CD4-positive, alpha-beta T cell (primary cell): ENCODE measurements at regions of chr4 and their contacts with region 1.

Region 1: GRCh38 chr4:69881173-69881773 is 21.3 kb upstream of the SULT1E1 start:
- DNase-seq: peak in 9 of 14 experiments; percentile 1 to 64 (median 9)
- ATAC-seq: peak; percentile 82
- H3K4me3 ChIP-seq: no peak overlapping the region
- H3K4me3 Mint-ChIP-seq: no peak overlapping the region
- H3K27ac ChIP-seq: no peak overlapping the region
- H3K27ac Mint-ChIP-seq: no peak overlapping the region
- H3K4me1 ChIP-seq: no peaks in the 10 kb centered on the region
- H3K4me1 Mint-ChIP-seq: no peaks in the 10 kb centered on the region
- H3K27me3 ChIP-seq: no peaks in the 10 kb centered on the region
- H3K27me3 Mint-ChIP-seq: peaks cover 12% of the 10 kb centered on the region
- CTCF ChIP-seq: peak; percentile 84

Region 2: GRCh38 chr4:68271851-68272756 is 1609.2 kb before region 1 on chr4:
- CTCF ChIA-PET with region 1: no interaction called
- POLR2A ChIA-PET with region 1: no interaction called
- intact Hi-C with region 1: loop called in 1 of 2 experiments (anchors 5 kb)
- DNase-seq: peak in 3 of 14 experiments; percentile 55 to 61 (median 56)
- ATAC-seq: peak; percentile 56
- H3K4me3 ChIP-seq: no peak overlapping the region
- H3K4me3 Mint-ChIP-seq: peak overlapping the region; percentile 31
- H3K27ac ChIP-seq: no peak overlapping the region
- H3K27ac Mint-ChIP-seq: no peak overlapping the region
- H3K4me1 ChIP-seq: no peaks in the 10 kb centered on the region
- H3K4me1 Mint-ChIP-seq: peaks cover 3% of the 10 kb centered on the region
- H3K27me3 ChIP-seq: peaks cover 0 to 4% of the 10 kb centered on the region in 2 experiments
- H3K27me3 Mint-ChIP-seq: peaks cover 17% of the 10 kb centered on the region
- CTCF ChIP-seq: peak; percentile 85

Region 3: DNA sequence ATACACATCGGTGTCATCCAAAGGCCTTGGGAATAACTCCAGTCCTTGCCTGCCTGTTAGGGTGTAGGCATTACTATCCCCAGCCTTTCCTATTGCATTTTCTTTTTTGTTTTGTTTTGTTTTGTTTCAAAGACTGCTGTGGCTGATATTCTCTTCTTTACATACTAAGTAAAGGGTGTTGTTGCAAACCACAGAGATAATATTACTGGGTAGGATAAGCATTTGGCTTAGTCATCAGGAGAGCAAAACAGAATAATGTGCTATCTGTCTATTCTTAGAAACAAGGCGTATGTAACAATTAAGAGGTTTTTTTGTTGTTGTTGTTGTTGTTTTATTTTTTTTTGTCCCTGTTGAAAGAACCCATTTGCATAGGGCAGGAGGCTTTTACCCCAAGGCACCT is 559.2 kb before region 1 on chr4:
- CTCF ChIA-PET with region 1: no interaction called
- POLR2A ChIA-PET with region 1: no interaction called
- intact Hi-C with region 1: loop called in 1 of 2 experiments (anchors 10 kb)
- DNase-seq: no peak
- ATAC-seq: no peak
- H3K4me3 ChIP-seq: no peak overlapping the region
- H3K4me3 Mint-ChIP-seq: no peak overlapping the region
- H3K27ac ChIP-seq: no peak overlapping the region
- H3K27ac Mint-ChIP-seq: no peak overlapping the region
- H3K4me1 ChIP-seq: no peaks in the 10 kb centered on the region
- H3K4me1 Mint-ChIP-seq: no peaks in the 10 kb centered on the region
- H3K27me3 ChIP-seq: no peaks in the 10 kb centered on the region
- H3K27me3 Mint-ChIP-seq: no peaks in the 10 kb centered on the region
- CTCF ChIP-seq: no peak

Region 4: GRCh38 chr4:69689599-69689998 is 191.7 kb before region 1 on chr4:
- CTCF ChIA-PET with region 1: no interaction called
- POLR2A ChIA-PET with region 1: no interaction called
- intact Hi-C with region 1: loop called (anchors 1 kb)
- DNase-seq: peak in 3 of 14 experiments; percentile 49 to 67 (median 56)
- ATAC-seq: peak; percentile 51
- H3K4me3 ChIP-seq: no peak overlapping the region
- H3K4me3 Mint-ChIP-seq: no peak overlapping the region
- H3K27ac ChIP-seq: no peak overlapping the region
- H3K27ac Mint-ChIP-seq: no peak overlapping the region
- H3K4me1 ChIP-seq: no peaks in the 10 kb centered on the region
- H3K4me1 Mint-ChIP-seq: peaks cover 5% of the 10 kb centered on the region
- H3K27me3 ChIP-seq: no peaks in the 10 kb centered on the region
- H3K27me3 Mint-ChIP-seq: no peaks in the 10 kb centered on the region
- CTCF ChIP-seq: peak; percentile 77

Region 5: GRCh38 chr4:69823481-69824186 is 57.6 kb before region 1 on chr4:
- CTCF ChIA-PET with region 1: no interaction called
- POLR2A ChIA-PET with region 1: no interaction called
- intact Hi-C with region 1: loop called in 1 of 2 experiments (anchors 1 kb)
- DNase-seq: peak; percentile 27 to 69 (median 50)
- ATAC-seq: peak; percentile 96
- H3K4me3 ChIP-seq: no peak overlapping the region
- H3K4me3 Mint-ChIP-seq: no peak overlapping the region
- H3K27ac ChIP-seq: no peak overlapping the region
- H3K27ac Mint-ChIP-seq: no peak overlapping the region
- H3K4me1 ChIP-seq: no peaks in the 10 kb centered on the region
- H3K4me1 Mint-ChIP-seq: peaks cover 14% of the 10 kb centered on the region
- H3K27me3 ChIP-seq: no peaks in the 10 kb centered on the region
- H3K27me3 Mint-ChIP-seq: no peaks in the 10 kb centered on the region
- CTCF ChIP-seq: peak; percentile 69

Region 6: DNA sequence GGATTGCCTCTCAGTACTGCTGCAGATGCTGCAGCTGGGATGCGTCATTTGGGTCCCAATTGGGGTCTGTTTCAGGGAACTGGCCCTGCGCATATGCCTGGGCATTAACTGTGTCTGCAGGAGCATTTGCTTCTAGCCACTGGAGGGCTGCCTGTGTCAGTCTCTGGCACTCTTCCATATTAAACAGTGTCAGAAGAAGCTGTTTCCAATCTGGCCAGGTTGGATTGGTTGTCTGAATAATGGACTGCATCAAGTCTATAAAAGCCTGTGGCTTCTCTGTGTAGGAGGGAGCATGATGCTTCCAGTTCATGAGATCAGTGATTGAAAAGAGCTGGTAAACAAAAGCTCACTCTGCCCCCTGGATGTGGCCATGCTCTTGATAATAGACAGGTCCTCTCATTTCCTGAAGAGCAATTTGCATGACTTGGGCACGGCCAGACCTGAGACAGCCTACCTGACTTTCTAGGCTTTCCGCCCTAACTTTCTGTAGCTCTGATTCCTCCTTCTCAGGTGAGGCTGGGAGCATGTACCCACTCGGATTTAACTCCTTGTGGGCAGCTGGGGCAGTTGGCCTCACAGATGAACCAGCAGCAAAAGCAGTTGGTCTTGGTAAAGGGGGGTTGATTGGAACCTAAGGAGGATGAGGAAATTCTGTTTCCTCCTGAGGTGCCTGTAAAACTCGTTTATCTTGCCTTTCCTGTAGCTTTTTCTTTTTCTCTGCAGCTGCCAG is 50.5 kb before region 1 on chr4:
- CTCF ChIA-PET with region 1: no interaction called
- POLR2A ChIA-PET with region 1: no interaction called
- intact Hi-C with region 1: loop called in 1 of 2 experiments (anchors 2 kb)
- DNase-seq: peak in 2 of 14 experiments; percentile 4 to 10
- ATAC-seq: peak; percentile 26
- H3K4me3 ChIP-seq: no peak overlapping the region
- H3K4me3 Mint-ChIP-seq: peak overlapping the region; percentile 90
- H3K27ac ChIP-seq: no peak overlapping the region
- H3K27ac Mint-ChIP-seq: no peak overlapping the region
- H3K4me1 ChIP-seq: peaks cover 12% of the 10 kb centered on the region
- H3K4me1 Mint-ChIP-seq: peaks cover 15% of the 10 kb centered on the region
- H3K27me3 ChIP-seq: no peaks in the 10 kb centered on the region
- H3K27me3 Mint-ChIP-seq: no peaks in the 10 kb centered on the region
- CTCF ChIP-seq: no peak